ENCODE measurements at regions of chr2 and their contacts with region 1.

Region 1: DNA sequence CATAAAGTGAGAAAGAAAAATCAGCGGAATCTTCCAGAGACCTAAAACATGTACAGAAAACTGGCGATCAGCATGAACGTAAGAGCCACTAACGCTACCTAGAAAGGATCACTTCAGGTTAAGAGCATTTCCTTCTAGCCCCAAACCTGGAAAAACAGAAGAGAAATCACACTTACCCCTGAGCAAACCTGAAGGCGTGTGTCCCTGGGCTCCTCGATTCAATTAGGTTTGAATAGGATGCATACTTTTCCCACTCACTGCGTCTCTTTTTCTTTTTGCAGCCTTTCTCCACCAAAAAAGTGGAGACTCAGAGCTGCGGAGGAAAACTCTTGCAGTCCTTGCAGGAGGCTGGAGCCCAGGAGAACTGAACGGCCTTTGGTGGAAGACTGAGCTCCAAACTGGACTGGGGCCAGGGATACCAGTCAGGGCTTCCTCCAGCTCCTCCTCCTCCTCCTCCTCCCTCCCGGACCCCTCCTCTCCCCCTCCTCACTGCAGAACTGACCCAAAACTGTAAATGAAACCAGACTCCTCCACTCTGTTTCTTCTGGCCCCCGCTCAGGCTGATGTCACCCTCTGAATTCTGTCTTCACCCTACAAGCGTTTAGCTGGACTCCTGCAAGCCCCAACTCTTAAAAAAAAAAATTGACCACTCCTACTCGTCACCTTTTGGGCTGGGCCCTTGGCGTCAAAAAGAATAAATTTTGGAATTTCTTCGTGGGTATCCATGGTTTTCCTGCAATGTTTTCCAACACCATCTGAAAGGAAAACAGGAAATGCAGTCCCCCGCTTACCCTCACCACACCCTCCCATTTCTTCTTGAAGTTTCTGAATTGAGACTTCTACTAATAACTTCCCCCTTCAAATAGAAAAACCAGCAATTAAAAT is at the start of gene COL6A3:
- DNase-seq: no peak
- H3K4me3 ChIP-seq: no peak within 1 kb of the TSS
- H3K27ac ChIP-seq: no peak within 1 kb of the TSS
- H3K4me1 ChIP-seq: no peaks in the 10 kb centered on the region
- H3K27me3 ChIP-seq: no peaks in the 10 kb centered on the region
- CTCF ChIP-seq: no peak
- total RNA-seq, gene COL6A3: 0.14 to 7.2 TPM

Region 2: DNA sequence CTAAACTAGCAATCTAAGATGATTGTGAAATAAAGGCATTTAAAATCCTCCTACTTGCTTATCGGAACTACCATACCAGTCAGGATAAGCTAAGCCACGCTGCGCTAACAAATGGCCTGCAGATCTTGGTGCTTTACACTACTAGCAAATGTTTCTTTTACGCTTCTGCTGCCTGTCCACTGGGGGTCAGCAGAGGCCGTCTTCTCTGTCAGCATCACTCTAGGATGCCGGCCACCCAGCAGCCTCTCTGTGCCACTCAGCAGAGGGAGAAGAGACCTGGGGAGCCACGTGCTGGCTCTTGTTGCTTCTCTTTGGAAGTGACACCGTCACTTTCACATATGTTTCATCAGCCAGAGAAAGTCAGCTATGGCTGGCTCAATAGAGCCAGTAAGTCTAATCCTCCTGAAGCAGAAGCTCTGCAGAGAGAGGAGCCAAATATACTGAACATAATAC is 291.8 kb before region 1 on chr2:
- CTCF ChIA-PET with region 1: interaction called, 4 read pairs
- dilution Hi-C with region 1: no loop called
- in situ Hi-C with region 1: no loop called
- intact Hi-C with region 1: loop called (anchors 1 kb)
- DNase-seq: peak; percentile 54
- H3K4me3 ChIP-seq: no peak overlapping the region
- H3K27ac ChIP-seq: no peak overlapping the region
- H3K4me1 ChIP-seq: peaks cover 21% of the 10 kb centered on the region
- H3K27me3 ChIP-seq: no peaks in the 10 kb centered on the region
- CTCF ChIP-seq: peak; percentile 67 to 79

Region 3: GRCh38 chr2:237154082-237154638 is 259.9 kb before region 1 on chr2:
- CTCF ChIA-PET with region 1: interaction called, 5 read pairs
- dilution Hi-C with region 1: no loop called
- in situ Hi-C with region 1: no loop called
- intact Hi-C with region 1: loop called (anchors 1 kb)
- DNase-seq: peak; percentile 37
- H3K4me3 ChIP-seq: no peak overlapping the region
- H3K27ac ChIP-seq: no peak overlapping the region
- H3K4me1 ChIP-seq: peaks cover 9% of the 10 kb centered on the region
- H3K27me3 ChIP-seq: no peaks in the 10 kb centered on the region
- CTCF ChIP-seq: peak; percentile 64 to 67

Region 4: DNA sequence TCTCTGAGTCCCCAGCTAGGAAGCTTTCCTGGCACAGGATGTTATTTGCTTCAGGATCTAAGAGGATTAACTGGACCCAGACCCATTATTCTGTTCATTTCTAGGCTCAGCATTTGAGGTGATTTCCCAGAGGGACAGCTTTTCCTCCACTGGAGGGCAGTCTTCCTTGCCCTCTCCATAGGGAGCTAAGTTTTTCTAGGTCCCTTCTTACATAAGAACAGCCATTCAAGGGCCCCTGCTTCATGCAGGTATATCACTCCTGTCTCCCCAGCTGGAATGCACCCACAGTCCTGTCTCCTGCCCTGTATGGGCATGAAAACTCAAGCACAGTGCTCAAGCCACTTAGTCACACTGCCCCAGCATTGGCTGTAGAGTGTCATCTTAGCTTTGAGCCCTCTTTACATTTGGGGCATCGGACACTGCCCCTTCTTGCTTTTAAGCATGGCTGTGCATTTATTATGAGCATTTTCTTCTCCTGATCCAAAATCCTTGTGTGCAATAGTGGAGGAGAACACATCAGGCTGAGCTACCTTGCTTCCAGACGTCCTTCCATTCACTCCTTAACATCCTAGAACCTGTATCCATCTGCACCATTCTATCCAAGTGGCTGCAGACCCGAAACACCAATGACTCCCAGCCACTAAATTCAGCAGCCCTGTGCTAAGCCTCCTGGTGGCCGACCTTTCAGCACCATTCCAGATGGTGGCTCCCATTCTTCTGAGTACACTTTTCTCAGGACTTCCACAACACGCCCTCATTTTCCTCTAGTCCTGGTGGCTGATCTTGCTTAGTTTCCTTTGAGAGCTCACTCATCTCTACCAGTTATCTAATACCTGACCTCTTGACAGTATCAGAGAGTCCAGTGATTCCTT is 248.4 kb before region 1 on chr2:
- CTCF ChIA-PET with region 1: no interaction called
- dilution Hi-C with region 1: no loop called
- in situ Hi-C with region 1: loop called (anchors 10 kb)
- intact Hi-C with region 1: loop called (anchors 1 kb)
- DNase-seq: no peak
- H3K4me3 ChIP-seq: no peak overlapping the region
- H3K27ac ChIP-seq: no peak overlapping the region
- H3K4me1 ChIP-seq: no peaks in the 10 kb centered on the region
- H3K27me3 ChIP-seq: no peaks in the 10 kb centered on the region
- CTCF ChIP-seq: peak; percentile 68 to 77

Region 5: GRCh38 chr2:237171396-237171795 is 242.6 kb before region 1 on chr2:
- CTCF ChIA-PET with region 1: no interaction called
- dilution Hi-C with region 1: no loop called
- in situ Hi-C with region 1: loop called (anchors 10 kb)
- intact Hi-C with region 1: loop called (anchors 1 kb)
- DNase-seq: peak; percentile 63
- H3K4me3 ChIP-seq: no peak overlapping the region
- H3K27ac ChIP-seq: no peak overlapping the region
- H3K4me1 ChIP-seq: peaks cover 2% of the 10 kb centered on the region
- H3K27me3 ChIP-seq: no peaks in the 10 kb centered on the region
- CTCF ChIP-seq: peak; percentile 22 to 44

Region 6: DNA sequence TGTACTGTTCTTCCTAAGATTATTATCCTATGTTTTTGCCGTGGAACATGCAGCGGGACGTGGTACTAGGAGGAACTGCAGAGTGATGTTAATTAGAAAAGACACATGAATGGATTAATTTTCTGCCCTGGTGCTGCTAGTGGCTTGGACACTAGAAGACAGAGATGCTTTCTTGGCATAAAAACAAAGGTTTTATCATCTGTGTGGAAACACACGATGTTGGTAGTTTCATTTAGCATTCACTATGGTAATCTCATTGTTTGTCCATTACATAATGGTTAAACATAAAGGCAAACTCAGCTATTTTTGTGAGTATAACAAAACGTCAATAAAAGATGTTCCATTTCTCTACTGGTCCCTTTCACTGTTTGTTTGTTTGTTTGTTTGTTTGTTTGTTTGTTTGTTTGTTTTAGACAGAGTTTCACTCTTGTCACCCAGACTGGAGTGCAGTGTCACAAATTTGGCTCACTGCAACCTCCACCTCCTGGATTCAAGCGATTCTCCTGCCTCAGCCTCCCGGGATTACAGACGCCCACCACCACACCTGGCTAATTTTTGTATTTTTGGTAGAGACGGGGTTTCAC is 22.8 kb before region 1 on chr2:
- CTCF ChIA-PET with region 1: no interaction called
- dilution Hi-C with region 1: no loop called
- in situ Hi-C with region 1: no loop called
- intact Hi-C with region 1: no loop called
- DNase-seq: no peak
- H3K4me3 ChIP-seq: no peak overlapping the region
- H3K27ac ChIP-seq: no peak overlapping the region
- H3K4me1 ChIP-seq: no peaks in the 10 kb centered on the region
- H3K27me3 ChIP-seq: peaks cover under 1% of the 10 kb centered on the region
- CTCF ChIP-seq: no peak